ENCODE measurements at regions of chr16 and their contacts with region 1.

Region 1: DNA sequence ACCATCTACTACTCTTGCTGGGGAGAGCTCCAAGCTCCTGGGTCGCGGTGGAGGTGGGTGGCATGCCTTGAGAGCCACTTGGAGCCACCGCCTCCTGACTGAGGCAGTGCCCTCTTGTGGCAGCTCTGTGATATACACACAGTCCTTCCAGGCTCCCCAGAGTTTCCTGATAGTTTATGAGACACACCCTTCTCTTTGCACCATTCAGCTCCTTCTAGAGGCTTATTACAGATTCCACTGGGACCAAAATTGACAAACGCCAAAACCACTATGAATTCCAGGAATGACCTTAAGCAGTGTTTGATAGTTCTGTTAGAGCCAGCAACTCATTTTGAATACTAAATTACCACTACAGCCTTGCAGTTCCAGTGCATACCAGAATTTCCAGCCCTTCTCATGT is 170.1 kb upstream of the CDH13 start:
- DNase-seq: peak; percentile 26 to 28
- ATAC-seq: peak in 7 of 8 donors; percentile 38 to 85 (median 75)
- H3K4me3 ChIP-seq: no peak overlapping the region
- H3K27ac ChIP-seq: no peak overlapping the region
- H3K4me1 ChIP-seq: no peaks in the 10 kb centered on the region
- H3K27me3 ChIP-seq: peaks cover 0 to 14% (median 8%) of the 10 kb centered on the region in 7 donors
- CTCF ChIP-seq: peak; percentile 39 to 81 (median 73)

Region 2: GRCh38 chr16:82368041-82368440 is 88.6 kb before region 1 on chr16:
- intact Hi-C with region 1: loop called in 1 of 10 experiments (anchors 5 kb)
- DNase-seq: peak; percentile 52 to 64
- ATAC-seq: peak; percentile 80 to 95 (median 90)
- H3K4me3 ChIP-seq: no peak overlapping the region
- H3K27ac ChIP-seq: no peak overlapping the region
- H3K4me1 ChIP-seq: no peaks in the 10 kb centered on the region
- H3K27me3 ChIP-seq: no peaks in the 10 kb centered on the region
- CTCF ChIP-seq: peak; percentile 6 to 58 (median 40)

Region 3: GRCh38 chr16:82405736-82406135 is 50.9 kb before region 1 on chr16:
- intact Hi-C with region 1: no loop called
- DNase-seq: no peak
- ATAC-seq: no peak
- H3K4me3 ChIP-seq: no peak overlapping the region
- H3K27ac ChIP-seq: no peak overlapping the region
- H3K4me1 ChIP-seq: no peaks in the 10 kb centered on the region
- H3K27me3 ChIP-seq: peaks cover 0 to 23% (median 5%) of the 10 kb centered on the region in 7 donors
- CTCF ChIP-seq: no peak